ENCODE measurements at regions of chr10 and their contacts with region 1.

Region 1: GRCh38 chr10:13371897-13372470 is 23.9 kb upstream of the SEPHS1 start:
- DNase-seq: peak; percentile 73
- ATAC-seq: peak; percentile 93
- H3K4me3 Mint-ChIP-seq: no peak overlapping the region
- H3K27ac Mint-ChIP-seq: no peak overlapping the region
- H3K4me1 Mint-ChIP-seq: no peaks in the 10 kb centered on the region
- H3K27me3 Mint-ChIP-seq: peaks cover 7% of the 10 kb centered on the region

Region 2: DNA sequence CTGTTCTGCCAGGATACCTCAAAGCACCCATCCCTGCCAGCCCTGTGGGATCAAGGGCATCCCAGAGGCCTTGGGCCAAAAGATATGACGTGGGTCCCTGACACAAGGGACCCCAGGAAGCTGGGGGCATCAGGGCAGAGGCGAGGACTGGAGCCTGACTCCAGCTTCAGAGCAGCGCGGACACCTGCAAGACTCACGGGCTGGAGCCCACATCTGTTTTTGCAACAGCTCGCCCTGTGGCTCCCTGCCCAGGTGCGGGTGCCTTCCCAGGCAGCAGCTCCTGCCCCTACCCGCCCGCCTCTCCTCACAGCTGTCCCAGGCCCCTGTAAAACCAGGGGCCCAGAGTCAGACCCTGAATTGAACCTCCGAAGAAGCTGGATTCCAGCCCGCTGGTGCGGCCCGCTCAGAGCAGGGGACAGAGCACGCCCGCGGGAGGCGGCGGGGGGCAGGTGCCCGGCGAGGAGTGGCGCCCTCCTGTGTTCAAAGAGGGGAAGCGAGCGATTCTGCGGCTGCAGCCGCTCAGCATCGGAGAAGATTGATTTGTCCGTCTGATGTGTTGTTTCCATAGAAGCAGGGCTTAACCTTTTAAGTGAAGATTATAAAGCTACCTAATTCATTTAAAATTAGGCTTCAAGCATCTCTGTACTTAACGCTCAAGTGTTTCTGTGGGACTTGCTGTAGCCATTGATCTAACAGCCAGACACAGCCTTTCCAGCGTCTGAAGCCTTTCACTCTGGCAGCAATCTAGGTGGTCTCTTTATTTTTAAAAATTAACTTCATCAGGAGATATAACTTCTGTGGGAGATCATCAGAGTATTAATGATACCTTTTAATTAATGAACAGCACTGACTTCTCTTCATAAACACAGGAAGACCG is 68.4 kb after region 1 on chr10:
- CTCF ChIA-PET with region 1: interaction called, 37 read pairs
- DNase-seq: peak; percentile 60
- ATAC-seq: peak; percentile 92
- H3K4me3 Mint-ChIP-seq: peak overlapping the region; percentile 21
- H3K27ac Mint-ChIP-seq: no peak overlapping the region
- H3K4me1 Mint-ChIP-seq: peaks cover 7% of the 10 kb centered on the region
- H3K27me3 Mint-ChIP-seq: peaks cover 49% of the 10 kb centered on the region

Region 3: DNA sequence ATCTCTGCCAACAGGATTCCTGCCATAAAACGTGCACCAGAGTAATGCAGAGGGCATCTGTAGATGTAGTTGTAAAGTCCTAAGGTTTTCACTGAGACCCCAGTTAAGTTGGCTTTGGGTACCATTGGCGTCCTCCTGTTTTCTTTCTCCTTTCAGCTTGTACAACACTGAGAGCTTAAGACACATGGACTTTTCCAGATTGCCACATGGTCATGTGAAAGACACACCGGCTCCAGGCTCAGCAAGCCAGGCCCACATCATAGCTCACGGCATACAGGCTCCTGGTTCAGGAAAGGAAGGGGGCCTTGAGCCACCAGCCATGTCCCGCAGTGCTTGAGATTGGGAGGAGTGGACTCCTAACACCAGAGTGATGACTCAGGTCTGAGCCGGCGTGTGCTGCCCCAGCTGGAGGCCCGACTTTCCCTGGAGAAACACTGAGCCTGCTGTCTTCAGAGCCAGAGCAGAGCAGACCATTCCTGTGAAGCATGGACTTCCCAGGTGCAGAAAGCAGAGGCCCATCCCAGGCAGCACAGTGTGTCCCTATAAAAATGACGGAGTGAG is 467.5 kb after region 1 on chr10:
- CTCF ChIA-PET with region 1: no interaction called
- DNase-seq: no peak
- ATAC-seq: no peak
- H3K4me3 Mint-ChIP-seq: no peak overlapping the region
- H3K27ac Mint-ChIP-seq: no peak overlapping the region
- H3K4me1 Mint-ChIP-seq: no peaks in the 10 kb centered on the region
- H3K27me3 Mint-ChIP-seq: no peaks in the 10 kb centered on the region